Activated CD4-positive, alpha-beta T cell treated with anti-CD3 and anti-CD28 coated beads, Interleukin-2, amount 10 ng/mL, durations not matched to agents 24 days and 14 days (primary cell): ENCODE measurements at regions of chr10 and their contacts with region 1.

Region 1: GRCh38 chr10:118341791-118342637 is at the start of gene FAM204A:
- DNase-seq: peak; percentile 99
- H3K4me3 Mint-ChIP-seq: peak within 1 kb of the TSS; percentile 89
- H3K27ac Mint-ChIP-seq: peak within 1 kb of the TSS; percentile 92
- H3K4me1 Mint-ChIP-seq: peaks cover 28% of the 10 kb centered on the region
- H3K27me3 Mint-ChIP-seq: peaks cover 9% of the 10 kb centered on the region
- total RNA-seq, gene FAM204A: 57.2 and 60.0 TPM in 2 replicates

Region 2: GRCh38 chr10:118046395-118047156 is 295.4 kb before region 1 on chr10 and contains the start of gene RAB11FIP2:
- intact Hi-C with region 1: loop called (anchors 1 kb)
- DNase-seq: peak; percentile 99
- H3K4me3 Mint-ChIP-seq: peak within 1 kb of the TSS; percentile 91
- H3K27ac Mint-ChIP-seq: peak within 1 kb of the TSS; percentile 85
- H3K4me1 Mint-ChIP-seq: peaks cover 21% of the 10 kb centered on the region
- H3K27me3 Mint-ChIP-seq: peaks cover 15% of the 10 kb centered on the region
- total RNA-seq, gene RAB11FIP2: 12.3 and 14.5 TPM in 2 replicates

Region 3: DNA sequence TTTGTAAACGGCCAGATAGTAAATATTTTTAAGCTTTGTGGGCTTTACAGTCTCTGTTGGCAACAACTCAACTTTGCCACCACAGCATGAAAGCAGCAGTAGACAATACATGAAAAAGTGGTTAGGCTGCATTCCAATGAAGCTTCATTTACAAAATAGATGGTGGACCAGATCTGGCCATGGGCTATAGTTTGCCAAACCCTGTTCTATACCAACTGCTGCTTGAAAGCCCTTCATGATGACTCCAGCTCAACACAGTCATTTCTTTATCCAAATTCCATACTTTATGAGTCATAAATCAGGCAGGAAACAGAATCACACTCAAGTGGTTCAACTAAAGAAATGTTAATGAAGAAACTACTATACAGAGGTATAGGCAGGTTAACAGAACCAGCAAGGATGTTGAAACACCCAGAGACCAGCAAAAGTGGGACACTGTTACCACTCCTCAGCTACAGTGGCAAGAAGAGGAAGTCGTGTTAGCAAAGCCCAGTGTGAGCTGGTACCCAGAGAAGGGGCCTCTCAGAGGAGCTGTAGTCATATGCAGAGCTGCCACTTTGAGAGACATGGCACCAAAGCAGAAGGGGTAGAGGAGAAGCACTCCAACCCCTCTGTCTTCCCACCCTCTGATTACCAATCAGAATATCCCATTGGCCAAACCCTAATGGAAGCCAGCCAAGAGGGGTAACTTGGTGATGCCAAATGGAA is 180.9 kb after region 1 on chr10:
- intact Hi-C with region 1: no loop called
- DNase-seq: peak; percentile 55
- H3K4me3 Mint-ChIP-seq: no peak overlapping the region
- H3K27ac Mint-ChIP-seq: no peak overlapping the region
- H3K4me1 Mint-ChIP-seq: peaks cover 22% of the 10 kb centered on the region
- H3K27me3 Mint-ChIP-seq: peaks cover 5% of the 10 kb centered on the region